Psoas muscle (tissue), 8 donors: ENCODE measurements at regions of chr3 and their contacts with region 1.

Region 1: GRCh38 chr3:128322066-128323022 is 144.3 kb downstream of the DNAJB8 start:
- DNase-seq: peak; percentile 39 to 76
- ATAC-seq: peak; percentile 57 to 82 (median 64)
- H3K4me3 ChIP-seq: no peak overlapping the region
- H3K27ac ChIP-seq: no peak overlapping the region
- H3K4me1 ChIP-seq: peaks cover 6% of the 10 kb centered on the region
- H3K27me3 ChIP-seq: no peaks in the 10 kb centered on the region
- CTCF ChIP-seq: peak; percentile 55

Region 2: GRCh38 chr3:128095222-128095703 is 227.1 kb before region 1 on chr3:
- intact Hi-C with region 1: loop called in 1 of 2 experiments (anchors 10 kb)
- DNase-seq: peak; percentile 76 to 88
- ATAC-seq: peak; percentile 96 to 100 (median 98)
- H3K4me3 ChIP-seq: no peak overlapping the region
- H3K27ac ChIP-seq: peak overlapping the region; percentile 30
- H3K4me1 ChIP-seq: peaks cover 4% of the 10 kb centered on the region
- H3K27me3 ChIP-seq: no peaks in the 10 kb centered on the region
- CTCF ChIP-seq: peak; percentile 88

Region 3: GRCh38 chr3:128170805-128171516 is 151.4 kb before region 1 on chr3:
- intact Hi-C with region 1: loop called (anchors 5 kb)
- DNase-seq: peak; percentile 44 to 68
- ATAC-seq: peak; percentile 70 to 91 (median 78)
- H3K4me3 ChIP-seq: no peak overlapping the region
- H3K27ac ChIP-seq: no peak overlapping the region
- H3K4me1 ChIP-seq: peaks cover 23% of the 10 kb centered on the region
- H3K27me3 ChIP-seq: no peaks in the 10 kb centered on the region
- CTCF ChIP-seq: peak; percentile 54

Region 4: DNA sequence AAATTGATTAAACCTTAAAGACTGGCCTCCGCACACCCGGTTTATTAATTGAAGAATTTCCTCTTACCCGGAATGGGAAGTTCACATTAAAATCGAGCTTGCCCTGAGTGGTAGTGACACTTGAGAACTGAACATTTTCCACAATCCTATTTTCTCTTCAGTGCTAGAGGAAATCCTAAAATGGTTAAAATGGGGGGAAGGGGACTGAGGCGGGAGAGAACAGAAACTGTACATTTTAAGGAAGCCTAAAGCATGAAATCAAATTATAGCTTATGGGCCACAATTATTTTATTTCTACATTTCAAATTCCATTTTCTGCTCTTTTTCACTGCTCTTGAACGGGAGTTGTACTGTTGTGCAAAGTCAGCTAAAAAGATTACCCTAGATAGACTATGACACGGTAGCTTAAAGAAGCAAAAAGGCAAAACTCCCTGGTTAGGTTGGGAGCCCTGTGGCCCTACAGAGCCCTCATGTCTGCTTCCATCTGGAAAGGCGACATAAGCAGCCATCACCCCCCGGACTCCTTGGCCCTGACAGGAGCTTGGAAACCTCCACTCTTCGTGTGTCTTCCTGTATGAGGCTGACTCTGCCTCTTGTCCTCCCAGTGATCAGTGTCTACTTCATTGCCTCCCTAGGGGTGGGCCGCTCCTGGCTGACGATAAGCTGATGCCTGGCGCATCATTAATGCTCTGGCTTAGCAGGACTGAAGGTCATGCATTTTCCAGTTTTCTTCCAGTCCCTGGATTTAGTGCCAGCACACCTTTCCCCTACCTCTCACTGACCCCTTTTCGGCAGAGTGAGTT is 89.8 kb before region 1 on chr3:
- intact Hi-C with region 1: loop called in 1 of 2 experiments (anchors 5 kb)
- DNase-seq: no peak
- ATAC-seq: peak in 1 of 4 donors; percentile 57
- H3K4me3 ChIP-seq: no peak overlapping the region
- H3K27ac ChIP-seq: no peak overlapping the region
- H3K4me1 ChIP-seq: no peaks in the 10 kb centered on the region
- H3K27me3 ChIP-seq: no peaks in the 10 kb centered on the region
- CTCF ChIP-seq: no peak